ENCODE measurements at regions of chr14 and their contacts with region 1.

Region 1: GRCh38 chr14:75002392-75003249 is at the start of gene EIF2B2:
- H3K4me3 Mint-ChIP-seq: peak within 1 kb of the TSS; percentile 99
- H3K27ac Mint-ChIP-seq: peak within 1 kb of the TSS; percentile 89
- H3K4me1 Mint-ChIP-seq: peaks cover 31% of the 10 kb centered on the region
- H3K27me3 Mint-ChIP-seq: no peaks in the 10 kb centered on the region

Region 2: DNA sequence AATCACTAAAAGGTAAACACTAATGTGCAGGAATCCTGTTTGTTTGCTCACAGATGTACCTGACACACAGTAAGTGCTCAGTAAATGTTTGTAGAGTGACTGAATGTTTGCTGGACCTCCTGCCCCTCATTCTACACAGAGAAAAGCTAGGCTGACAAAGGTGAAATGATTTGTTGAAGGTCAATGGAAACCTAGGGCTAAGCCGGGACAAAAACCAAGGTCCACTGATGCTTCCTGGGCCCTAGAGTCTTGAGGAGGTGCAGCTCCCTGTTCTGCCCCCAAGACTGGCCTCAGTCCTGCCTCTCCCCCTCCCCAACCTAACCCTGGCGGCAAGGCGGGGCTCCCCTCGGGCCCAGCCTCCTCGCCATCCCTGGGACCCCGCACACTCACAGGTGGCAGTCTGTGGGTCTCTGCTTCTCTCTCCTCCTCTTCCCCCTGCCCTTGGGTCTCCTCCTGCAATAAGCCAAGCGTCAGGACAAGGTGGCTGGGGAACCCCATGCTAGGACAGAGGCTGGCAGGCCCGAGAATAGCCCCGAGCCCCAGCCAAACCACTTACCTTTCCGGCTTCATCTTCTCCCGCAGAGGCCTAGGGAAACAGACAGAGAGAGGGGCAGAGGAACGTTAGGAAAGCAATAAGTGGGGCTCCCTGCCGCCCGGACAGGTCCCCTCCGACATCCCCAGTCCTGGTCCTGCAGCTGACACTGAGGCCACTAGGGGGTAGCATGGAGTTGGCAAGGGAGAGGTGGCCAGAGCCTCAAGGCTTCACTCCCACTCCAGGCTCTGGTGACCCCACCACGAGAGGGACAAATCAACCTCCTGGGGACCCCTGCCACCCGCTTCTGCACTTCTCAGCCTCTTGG is 56.6 kb before region 1 on chr14:
- intact Hi-C with region 1: loop called (anchors 1 kb)
- H3K4me3 Mint-ChIP-seq: peak overlapping the region; percentile 24
- H3K27ac Mint-ChIP-seq: peak overlapping the region; percentile 60
- H3K4me1 Mint-ChIP-seq: peaks cover 32% of the 10 kb centered on the region
- H3K27me3 Mint-ChIP-seq: peaks cover 8% of the 10 kb centered on the region

Region 3: DNA sequence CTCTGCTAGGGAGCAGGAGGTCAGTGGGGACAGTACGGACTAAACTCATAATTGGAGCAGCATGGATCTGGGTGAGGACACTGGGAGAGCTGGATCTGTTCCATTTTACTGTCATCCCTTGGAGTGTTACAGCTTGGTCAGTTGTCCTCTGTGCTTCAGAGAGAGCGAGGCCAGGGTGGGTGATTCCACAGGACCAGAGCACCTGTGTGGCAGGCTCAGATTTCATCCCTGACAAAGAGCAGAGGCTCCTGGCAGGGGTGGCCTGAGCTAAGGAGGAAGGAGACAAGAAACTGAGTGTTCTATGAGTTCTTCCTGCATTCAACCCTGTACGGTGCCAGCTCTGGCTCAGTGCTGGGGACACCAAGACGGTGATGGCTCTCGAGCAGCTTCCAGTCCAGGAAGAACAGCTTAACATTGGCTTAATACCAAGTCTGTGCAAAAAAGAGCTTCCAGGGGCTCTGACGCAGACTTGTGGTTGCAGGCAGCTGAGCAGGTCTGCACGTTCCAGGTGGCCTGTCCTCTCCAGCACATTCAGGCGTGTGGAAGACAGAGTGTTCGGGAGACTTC is 38.8 kb before region 1 on chr14:
- intact Hi-C with region 1: loop called (anchors 2 kb)
- H3K4me3 Mint-ChIP-seq: no peak overlapping the region
- H3K27ac Mint-ChIP-seq: peak overlapping the region; percentile 86
- H3K4me1 Mint-ChIP-seq: peaks cover 54% of the 10 kb centered on the region
- H3K27me3 Mint-ChIP-seq: peaks cover 4% of the 10 kb centered on the region

Region 4: GRCh38 chr14:75063407-75064213 is 61.0 kb after region 1 on chr14 and contains the start of gene ACYP1:
- intact Hi-C with region 1: loop called (anchors 5 kb)
- H3K4me3 Mint-ChIP-seq: peak within 1 kb of the TSS; percentile 94
- H3K27ac Mint-ChIP-seq: peak within 1 kb of the TSS; percentile 92
- H3K4me1 Mint-ChIP-seq: peaks cover 14% of the 10 kb centered on the region
- H3K27me3 Mint-ChIP-seq: no peaks in the 10 kb centered on the region

Measured in dendritic cell treated with granulocyte-macrophage colony-stimulating factor and Interleukin-4, amounts not matched to agents 40 ng/mL and 50 ng/mL, for 4 days (primary cell).